A549 (cell line): ENCODE measurements at regions of chr1 and their contacts with region 1.

Region 1: GRCh38 chr1:201085916-201086735 is 26.1 kb downstream of the CACNA1S start:
- DNase-seq: peak; percentile 61 to 93
- ATAC-seq: peak; percentile 97 to 99
- H3K4me3 ChIP-seq: no peak overlapping the region
- H3K27ac ChIP-seq: no peak overlapping the region
- H3K4me1 ChIP-seq: no peaks in the 10 kb centered on the region
- CTCF ChIP-seq: peak; percentile 82
- EP300 ChIP-seq: no peak
- POLR2A ChIP-seq: no peak
- RAD21 ChIP-seq: peak; percentile 75 to 80

Region 2: GRCh38 chr1:201074018-201074417 is 12.1 kb before region 1 on chr1:
- CTCF ChIA-PET with region 1: interaction called, 10 read pairs
- POLR2A ChIA-PET with region 1: no interaction called
- DNase-seq: no peak
- ATAC-seq: no peak
- H3K4me3 ChIP-seq: no peak overlapping the region
- H3K27ac ChIP-seq: no peak overlapping the region
- H3K4me1 ChIP-seq: no peaks in the 10 kb centered on the region
- CTCF ChIP-seq: no peak
- EP300 ChIP-seq: no peak
- POLR2A ChIP-seq: no peak
- RAD21 ChIP-seq: no peak

Region 3: DNA sequence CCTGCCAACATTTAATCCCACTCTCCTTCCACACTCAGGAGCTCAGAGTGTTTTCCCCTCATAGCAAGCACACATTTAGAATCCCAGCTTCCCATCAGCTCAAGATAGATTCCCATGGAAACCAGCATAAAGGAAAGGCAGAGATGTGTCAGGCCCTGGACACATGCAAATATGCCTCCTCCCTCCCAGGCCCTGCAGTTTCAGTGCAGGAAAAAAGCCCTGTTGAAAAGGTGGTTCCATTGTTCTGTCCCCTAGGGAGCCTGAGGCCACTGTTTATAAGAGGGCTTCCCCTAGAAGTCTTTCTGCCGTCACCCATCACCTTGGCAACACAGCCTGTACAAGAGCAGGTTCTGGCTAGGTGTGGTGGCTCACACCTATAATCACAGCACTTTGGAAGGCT is 22.5 kb after region 1 on chr1:
- CTCF ChIA-PET with region 1: interaction called, 83 read pairs
- POLR2A ChIA-PET with region 1: interaction called, 3 read pairs
- DNase-seq: no peak
- ATAC-seq: no peak
- H3K4me3 ChIP-seq: no peak overlapping the region
- H3K27ac ChIP-seq: no peak overlapping the region
- H3K4me1 ChIP-seq: peaks cover 1% of the 10 kb centered on the region; the same call in 1 of the 3 replicates
- CTCF ChIP-seq: no peak
- EP300 ChIP-seq: no peak
- POLR2A ChIP-seq: no peak
- RAD21 ChIP-seq: no peak

Region 4: GRCh38 chr1:201137579-201138310 is 51.6 kb after region 1 on chr1:
- CTCF ChIA-PET with region 1: interaction called, 11 read pairs
- POLR2A ChIA-PET with region 1: interaction called, 5 read pairs
- DNase-seq: no peak
- ATAC-seq: peak; percentile 39 to 46; a peak in 5 of 6 replicates
- H3K4me3 ChIP-seq: no peak overlapping the region
- H3K27ac ChIP-seq: peak overlapping the region in 1 of 2 experiments; percentile 16; a peak in 1 of 6 replicates
- H3K4me1 ChIP-seq: peaks cover 13% of the 10 kb centered on the region; the same call in 1 of the 3 replicates
- CTCF ChIP-seq: no peak
- EP300 ChIP-seq: no peak
- POLR2A ChIP-seq: no peak
- RAD21 ChIP-seq: no peak

Region 5: GRCh38 chr1:201191653-201192260 is 105.6 kb after region 1 on chr1:
- CTCF ChIA-PET with region 1: no interaction called
- POLR2A ChIA-PET with region 1: no interaction called
- DNase-seq: peak; percentile 53 to 69
- ATAC-seq: peak; percentile 86 to 96
- H3K4me3 ChIP-seq: no peak overlapping the region
- H3K27ac ChIP-seq: peak overlapping the region in 1 of 2 experiments; percentile 78; a peak in 3 of 6 replicates
- H3K4me1 ChIP-seq: peaks cover 10% of the 10 kb centered on the region; the same call in 2 of the 3 replicates
- CTCF ChIP-seq: no peak
- EP300 ChIP-seq: no peak
- POLR2A ChIP-seq: no peak
- RAD21 ChIP-seq: no peak

Region 6: DNA sequence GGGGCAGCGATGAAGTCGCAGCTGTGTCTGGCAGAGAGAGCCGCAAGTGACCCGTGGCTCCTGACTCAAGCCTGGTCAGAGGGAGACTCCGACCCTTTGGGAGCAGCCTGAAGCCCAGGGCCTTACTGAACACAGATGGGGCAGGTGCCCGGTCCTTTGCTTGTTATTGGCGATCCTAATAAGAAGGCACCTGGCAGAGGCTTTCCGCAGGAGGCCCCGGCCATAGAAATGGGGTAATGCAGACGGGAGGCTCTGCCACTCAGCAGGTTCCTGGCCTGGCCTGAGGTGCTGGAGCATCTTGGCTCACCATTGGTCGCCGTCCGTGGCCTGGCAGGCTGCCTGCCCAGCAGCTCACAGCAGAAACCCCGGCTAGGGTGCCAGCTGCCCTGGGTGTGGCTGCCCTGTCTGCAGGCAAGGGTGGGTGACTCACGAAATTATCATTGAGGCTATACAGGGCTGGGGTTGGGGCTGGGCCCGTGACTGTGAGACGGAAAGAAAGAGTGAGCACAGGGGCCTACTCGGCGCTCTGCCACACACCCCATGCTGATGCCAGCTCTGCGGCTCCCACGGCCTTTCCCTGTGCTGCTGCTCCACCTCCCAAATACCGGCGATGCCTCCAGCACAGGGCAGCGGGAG is 189.0 kb after region 1 on chr1:
- CTCF ChIA-PET with region 1: no interaction called
- POLR2A ChIA-PET with region 1: no interaction called
- DNase-seq: peak; percentile 91 to 94
- ATAC-seq: peak; percentile 93 to 95
- H3K4me3 ChIP-seq: no peak overlapping the region
- H3K27ac ChIP-seq: peak overlapping the region; percentile 87
- H3K4me1 ChIP-seq: peaks cover 40% of the 10 kb centered on the region
- CTCF ChIP-seq: no peak
- EP300 ChIP-seq: peak in 1 of 2 experiments; percentile 53; a peak in 1 of 5 replicates
- POLR2A ChIP-seq: no peak
- RAD21 ChIP-seq: peak; percentile 11 to 25; a peak in 1 of 5 replicates